Activated CD4-positive, alpha-beta T cell treated with anti-CD3 and anti-CD28 coated beads for 36 hours (primary cell): ENCODE measurements at regions of chr1 and their contacts with region 1.

Region 1: GRCh38 chr1:9269078-9269501 is 23.6 kb upstream of the SPSB1 start:
- DNase-seq: no peak
- ATAC-seq: no peak
- H3K4me3 Mint-ChIP-seq: no peak overlapping the region
- H3K27ac Mint-ChIP-seq: no peak overlapping the region
- H3K4me1 Mint-ChIP-seq: peaks cover 2% of the 10 kb centered on the region
- H3K27me3 Mint-ChIP-seq: no peaks in the 10 kb centered on the region

Region 2: DNA sequence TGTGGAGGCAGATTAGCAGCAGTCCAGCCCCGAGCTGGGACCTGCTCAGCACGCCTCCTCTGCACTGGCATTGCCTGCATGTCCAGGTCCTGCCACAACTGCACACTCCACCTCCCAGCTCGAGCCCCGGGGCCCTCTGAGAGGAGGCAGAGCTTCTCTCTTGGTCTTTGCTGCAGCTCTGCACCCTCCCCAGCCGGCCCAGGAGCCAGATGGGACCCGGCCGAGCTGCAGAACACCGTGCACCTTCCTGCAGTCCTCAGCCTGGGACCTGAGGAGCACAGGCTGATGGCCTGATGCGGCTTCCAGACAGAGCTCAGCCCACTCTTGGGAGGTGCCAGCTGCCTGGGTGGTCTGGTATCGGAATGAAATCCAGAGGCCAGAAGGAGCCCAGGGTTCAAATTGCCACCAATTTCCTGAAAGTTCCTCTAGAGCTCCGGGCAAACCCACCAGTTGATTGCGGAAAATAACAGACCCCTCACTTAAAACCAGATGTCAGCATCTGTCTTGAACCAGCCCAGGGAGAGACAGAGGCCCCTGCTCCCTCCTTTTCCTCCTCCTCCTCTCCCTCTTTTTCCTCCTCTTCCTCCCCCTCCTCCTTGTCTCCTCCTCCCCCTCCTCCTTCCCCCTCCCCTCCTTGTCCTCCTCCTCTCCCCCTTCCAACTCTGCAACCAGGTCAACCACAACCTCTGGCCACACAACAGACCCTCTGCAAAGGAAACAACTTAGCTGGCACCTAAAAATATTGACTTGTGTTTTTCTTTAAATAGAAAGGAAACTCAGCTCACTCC is 13.0 kb after region 1 on chr1:
- CTCF ChIA-PET with region 1: interaction called, 11 read pairs
- POLR2A ChIA-PET with region 1: no interaction called
- intact Hi-C with region 1: no loop called
- DNase-seq: peak; percentile 27
- ATAC-seq: no peak
- H3K4me3 Mint-ChIP-seq: no peak overlapping the region
- H3K27ac Mint-ChIP-seq: no peak overlapping the region
- H3K4me1 Mint-ChIP-seq: peaks cover 43% of the 10 kb centered on the region
- H3K27me3 Mint-ChIP-seq: no peaks in the 10 kb centered on the region